Heart left ventricle (tissue), 16 donors: ENCODE measurements at regions of chr10 and their contacts with region 1.

Region 1: DNA sequence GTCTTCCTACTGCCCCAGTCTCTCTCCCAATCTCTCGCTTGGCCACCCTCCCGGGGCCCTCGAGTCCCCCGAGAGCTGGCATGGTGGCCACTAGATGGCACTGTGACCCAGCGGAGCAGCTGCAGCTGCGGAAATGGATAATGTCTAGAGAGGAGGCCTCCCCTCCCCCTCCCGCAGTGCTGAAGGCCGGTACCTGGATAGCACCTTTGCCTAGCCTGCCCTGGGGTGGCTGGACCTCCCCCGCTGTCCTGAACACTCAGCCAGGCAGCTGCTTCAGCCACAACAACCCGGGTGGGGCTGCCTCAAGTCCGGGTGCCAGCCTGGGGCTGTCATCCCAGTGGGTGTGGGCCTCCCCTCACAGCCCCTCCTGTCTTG is 65.2 kb downstream of the GOLGA7B start:
- DNase-seq: peak; percentile 66 to 87 (median 74)
- ATAC-seq: peak; percentile 79 to 90 (median 83)
- H3K4me3 ChIP-seq: no peak overlapping the region
- H3K27ac ChIP-seq: no peak overlapping the region
- H3K4me1 ChIP-seq: peaks cover 0 to 21% (median 6%) of the 10 kb centered on the region in 12 donors
- H3K27me3 ChIP-seq: no peaks in the 10 kb centered on the region
- CTCF ChIP-seq: peak; percentile 82 to 94 (median 88)
- POLR2A ChIP-seq: no peak

Region 2: DNA sequence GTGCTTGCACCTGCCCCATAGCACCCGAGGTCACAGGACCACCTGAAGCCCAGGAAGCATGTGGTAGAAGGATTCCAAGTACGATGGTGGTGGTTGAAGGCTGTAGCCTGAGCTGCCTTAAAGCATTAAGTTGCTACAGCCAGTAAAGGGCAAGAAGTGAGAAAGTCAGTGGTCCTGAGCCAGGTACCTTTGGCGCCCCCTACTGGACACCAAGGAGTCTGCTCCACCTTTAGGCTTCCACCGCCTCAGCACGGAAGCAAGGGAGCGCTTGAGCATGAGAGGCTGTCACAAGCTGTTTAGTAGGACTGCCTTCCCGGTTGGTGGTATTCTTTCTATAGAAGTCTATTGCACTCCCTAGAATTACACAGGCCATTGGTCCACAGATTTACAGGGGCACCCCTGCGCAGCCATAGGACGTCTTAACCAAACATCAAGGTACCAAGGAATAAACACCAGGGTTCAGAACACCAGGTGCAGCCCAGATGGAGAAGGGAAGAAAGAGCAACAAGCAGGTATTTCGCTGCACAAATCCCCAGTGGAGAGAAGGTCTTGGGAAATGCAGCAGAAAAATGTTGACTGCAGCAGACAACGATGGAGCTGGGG is 113.4 kb after region 1 on chr10:
- intact Hi-C with region 1: loop called in 5 of 10 experiments (anchors 5 kb)
- DNase-seq: peak in 4 of 5 donors; percentile 44 to 49 (median 46)
- ATAC-seq: peak; percentile 38 to 64 (median 57)
- H3K4me3 ChIP-seq: no peak overlapping the region
- H3K27ac ChIP-seq: no peak overlapping the region
- H3K4me1 ChIP-seq: peaks cover 0 to 25% (median 12%) of the 10 kb centered on the region in 12 donors
- H3K27me3 ChIP-seq: peaks cover 11 to 69% (median 31%) of the 10 kb centered on the region in 9 donors
- CTCF ChIP-seq: peak; percentile 60 to 87 (median 75)
- POLR2A ChIP-seq: no peak

Region 3: GRCh38 chr10:98045785-98046389 is 131.1 kb after region 1 on chr10:
- intact Hi-C with region 1: loop called (anchors 1 to 5 kb)
- DNase-seq: peak in 4 of 5 donors; percentile 45 to 57 (median 49)
- ATAC-seq: peak in 3 of 4 donors; percentile 40 to 65 (median 45)
- H3K4me3 ChIP-seq: no peak overlapping the region
- H3K27ac ChIP-seq: no peak overlapping the region
- H3K4me1 ChIP-seq: peaks cover 0 to 24% (median 5%) of the 10 kb centered on the region in 12 donors
- H3K27me3 ChIP-seq: peaks cover 0 to 12% (median 0%) of the 10 kb centered on the region in 9 donors
- CTCF ChIP-seq: peak; percentile 75 to 93 (median 84)
- POLR2A ChIP-seq: no peak